ENCODE measurements at regions of chr6 and their contacts with region 1.

Region 1: DNA sequence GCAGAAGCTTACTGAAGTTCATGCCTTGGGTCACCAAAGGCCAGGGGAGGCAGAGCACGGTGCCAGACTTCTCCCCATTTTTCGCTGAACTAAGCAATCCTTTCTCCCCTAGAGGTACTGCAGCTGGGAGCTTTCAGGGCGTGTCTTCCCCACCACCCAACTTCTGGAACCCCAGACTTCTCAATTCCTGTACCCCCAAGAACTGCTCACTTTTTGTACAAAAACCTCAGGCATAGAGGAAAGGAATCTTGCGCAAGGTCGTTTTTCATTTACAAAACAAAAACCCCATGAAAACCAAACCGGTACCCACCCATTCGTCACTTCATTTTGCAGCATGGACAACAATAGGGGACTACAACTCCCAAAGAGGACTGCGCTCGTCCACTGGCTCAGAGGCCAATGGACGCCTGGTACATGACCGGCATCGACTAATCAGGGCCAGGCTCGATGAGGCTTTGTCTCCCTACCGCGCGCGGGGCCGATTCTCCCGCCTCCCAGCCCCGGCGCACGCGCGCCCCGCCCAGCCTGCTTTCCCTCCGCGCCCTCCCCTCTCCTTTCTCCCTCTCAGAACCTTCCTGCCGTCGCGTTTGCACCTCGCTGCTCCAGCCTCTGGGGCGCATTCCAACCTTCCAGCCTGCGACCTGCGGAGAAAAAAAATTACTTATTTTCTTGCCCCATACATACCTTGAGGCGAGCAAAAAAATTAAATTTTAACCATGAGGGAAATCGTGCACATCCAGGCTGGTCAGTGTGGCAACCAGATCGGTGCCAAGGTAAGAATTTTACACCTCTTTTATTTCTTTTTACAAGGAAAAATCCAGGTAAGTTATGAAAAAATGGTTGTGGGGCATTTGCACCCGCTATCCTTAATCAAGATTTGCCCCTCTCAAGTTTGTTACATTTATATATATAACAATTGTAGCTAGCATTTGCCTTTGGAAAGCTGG is at the start of gene TUBB:
- DNase-seq: peak; percentile 99
- H3K4me3 ChIP-seq: peak within 1 kb of the TSS; percentile 80 to 97 (median 94)
- H3K27ac ChIP-seq: peak within 1 kb of the TSS; percentile 89 to 99 (median 98)
- H3K4me1 ChIP-seq: peaks cover 31 to 80% (median 77%) of the 10 kb centered on the region in 6 donors
- H3K27me3 ChIP-seq: no peaks in the 10 kb centered on the region
- CTCF ChIP-seq: peak in 7 of 11 experiments; percentile 7 to 28 (median 20)
- POLR2A ChIP-seq: peak in 2 of 3 donors; percentile 31 to 92
- total RNA-seq, gene TUBB: 189 to 344 (median 272) TPM

Region 2: DNA sequence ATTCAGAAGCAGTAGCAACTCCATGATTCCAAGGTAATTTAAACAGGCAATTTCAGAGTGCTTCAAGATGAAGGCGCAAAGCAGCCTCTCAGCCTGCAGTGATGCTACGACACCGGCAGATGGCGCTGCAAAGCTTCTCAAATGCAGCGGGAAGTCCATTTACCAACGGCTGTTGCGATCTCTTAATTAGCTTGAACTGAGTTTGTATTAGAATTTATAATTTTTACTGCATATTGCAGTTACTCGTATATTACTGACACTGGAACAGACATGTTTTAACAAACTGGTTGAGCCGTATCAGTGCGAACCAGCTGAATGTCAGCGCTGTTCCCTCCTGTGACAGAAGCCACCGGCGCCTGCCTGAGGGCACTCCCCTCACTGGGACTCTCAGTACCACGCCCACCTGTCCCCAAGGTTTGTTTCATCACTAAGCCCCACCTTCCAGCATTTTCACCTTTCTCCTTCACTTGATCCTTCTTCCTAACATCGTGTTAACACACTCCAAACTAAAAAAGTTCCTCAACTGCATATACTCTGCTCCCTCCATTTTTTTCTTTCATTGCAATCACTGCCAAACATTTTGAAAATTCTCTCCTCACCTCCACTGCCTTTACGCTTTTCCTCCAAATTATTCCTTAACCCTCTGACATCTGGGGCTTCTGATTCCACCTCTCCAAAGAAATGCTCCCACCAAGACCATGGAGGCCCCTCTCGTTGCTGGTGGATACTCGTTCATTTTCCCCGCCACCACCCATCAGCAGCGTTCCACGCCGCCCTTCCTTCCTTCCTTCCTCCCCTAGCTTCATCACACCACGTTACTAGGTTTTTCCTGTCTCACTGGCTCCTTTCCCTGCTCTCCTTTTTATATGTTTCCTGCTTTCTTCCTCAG is 178.3 kb before region 1 on chr6:
- intact Hi-C with region 1: no loop called
- DNase-seq: peak; percentile 94
- H3K4me3 ChIP-seq: peak overlapping the region; percentile 20 to 69 (median 37)
- H3K27ac ChIP-seq: peak overlapping the region; percentile 42 to 83 (median 75)
- H3K4me1 ChIP-seq: peaks cover 24 to 39% (median 31%) of the 10 kb centered on the region in 6 donors
- H3K27me3 ChIP-seq: no peaks in the 10 kb centered on the region
- CTCF ChIP-seq: peak; percentile 93 to 100 (median 99)
- POLR2A ChIP-seq: peak in 1 of 3 donors; percentile 30

Region 3: DNA sequence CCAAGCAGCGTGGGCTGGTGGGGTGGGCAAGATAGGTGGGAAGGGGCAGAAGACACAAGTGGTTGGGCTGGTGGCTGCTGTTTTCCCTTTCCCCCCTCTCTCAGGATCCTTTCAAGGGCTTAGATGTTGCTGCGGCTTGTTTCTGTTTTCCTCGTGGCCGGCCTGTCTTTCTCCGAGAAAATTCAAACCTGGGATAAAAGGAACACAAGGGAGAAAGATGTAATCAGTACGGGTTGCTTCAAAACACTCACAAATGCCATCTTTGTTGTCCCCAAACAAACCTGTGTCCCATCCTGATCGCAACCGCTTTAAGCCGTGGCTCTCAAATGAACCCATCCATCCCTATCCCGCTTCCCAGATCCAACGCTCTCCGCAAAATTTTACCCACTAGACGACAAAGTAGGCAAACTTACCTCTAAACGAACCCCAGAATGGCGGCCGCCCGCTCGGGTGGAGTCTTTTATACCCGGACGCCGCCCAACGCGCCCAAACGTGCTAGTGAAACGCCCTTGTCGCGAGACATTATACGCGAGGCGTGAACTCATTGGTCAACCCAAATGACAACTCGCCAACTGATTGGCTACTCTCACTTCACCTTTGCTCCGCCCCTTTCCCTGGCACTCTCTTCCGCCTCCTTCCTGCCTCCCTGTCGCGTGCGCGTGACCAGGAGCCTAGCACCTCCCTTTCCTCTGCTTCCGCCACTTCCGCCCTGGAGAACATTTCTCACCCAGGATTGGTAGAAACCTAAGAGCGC is 103.1 kb before region 1 on chr6 and contains the start of gene PPP1R10:
- intact Hi-C with region 1: loop called (anchors 10 kb)
- DNase-seq: peak; percentile 98
- H3K4me3 ChIP-seq: peak within 1 kb of the TSS; percentile 70 to 98 (median 85)
- H3K27ac ChIP-seq: peak within 1 kb of the TSS; percentile 93 to 98 (median 96)
- H3K4me1 ChIP-seq: peaks cover 34 to 67% (median 47%) of the 10 kb centered on the region in 6 donors
- H3K27me3 ChIP-seq: no peaks in the 10 kb centered on the region
- CTCF ChIP-seq: peak in 2 of 11 experiments; percentile 5 to 8
- POLR2A ChIP-seq: peak; percentile 90 to 98 (median 97)
- total RNA-seq, gene PPP1R10: 53.5 to 86.2 (median 75.9) TPM

Region 4: DNA sequence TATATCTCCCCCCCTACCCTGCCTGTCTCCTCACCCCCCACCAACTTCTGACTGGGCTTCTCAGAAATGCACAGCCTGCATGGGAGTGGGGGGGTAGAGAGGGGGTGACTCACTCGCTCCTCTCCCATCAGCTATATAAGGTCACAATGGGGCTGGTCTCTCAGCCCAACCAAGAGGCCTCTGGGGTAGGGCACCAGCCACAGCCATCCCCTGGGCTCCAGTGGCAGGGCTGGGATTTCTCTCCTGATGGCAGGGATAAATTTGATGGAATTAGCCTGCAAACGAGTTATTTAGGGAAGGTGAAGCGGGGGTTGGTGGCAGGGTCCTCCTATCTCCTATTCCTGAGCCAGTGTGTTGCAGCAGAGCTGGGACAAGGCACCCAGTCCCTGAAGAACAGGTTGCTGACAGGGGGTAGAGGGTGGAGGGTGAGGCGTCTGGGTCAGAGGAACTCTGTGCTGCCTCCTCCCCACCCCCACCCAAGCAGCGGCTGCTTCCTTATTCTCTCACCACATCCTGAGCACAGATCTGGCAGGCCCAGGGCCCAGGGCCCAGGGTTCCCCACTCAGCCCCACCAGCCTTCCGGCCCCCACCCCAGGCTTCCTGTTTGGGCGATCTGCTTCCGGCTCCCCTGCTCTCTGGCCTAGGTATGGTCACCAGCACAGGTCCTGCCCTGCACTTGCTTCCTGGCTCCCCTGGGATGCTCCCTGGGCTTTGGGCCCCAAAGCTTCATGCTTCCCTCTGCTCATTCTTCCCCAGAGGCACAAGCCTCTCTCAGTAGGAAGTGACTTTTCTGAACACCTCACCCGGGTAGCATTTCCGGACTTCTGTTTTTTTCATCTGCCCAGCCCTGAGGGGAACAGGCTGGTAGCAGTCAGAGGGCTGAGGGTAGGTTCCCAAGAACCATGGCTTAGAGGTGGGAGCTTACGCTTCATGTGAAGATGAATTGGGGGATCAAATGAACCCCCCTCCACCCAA is 37.6 kb before region 1 on chr6:
- intact Hi-C with region 1: loop called (anchors 2 kb)
- DNase-seq: peak; percentile 99
- H3K4me3 ChIP-seq: peak overlapping the region; percentile 90 to 99 (median 96)
- H3K27ac ChIP-seq: peak overlapping the region; percentile 93 to 100 (median 98)
- H3K4me1 ChIP-seq: peaks cover 36 to 84% (median 61%) of the 10 kb centered on the region in 6 donors
- H3K27me3 ChIP-seq: no peaks in the 10 kb centered on the region
- CTCF ChIP-seq: no peak
- POLR2A ChIP-seq: no peak

Measured in spleen (tissue), 13 donors.